Activated T-helper 2 cell treated with anti-CD3 and anti-CD28 coated beads, Interferon-gamma antibody, Interleukin-2, Interleukin-4, amounts not matched to agents 10 μg/mL and 5 μg/mL and 100 μg/mL, durations not matched to agents 14 hours and 24 hours and 36 hours (primary cell): ENCODE measurements at regions of chr11 and their contacts with region 1.

Region 1: DNA sequence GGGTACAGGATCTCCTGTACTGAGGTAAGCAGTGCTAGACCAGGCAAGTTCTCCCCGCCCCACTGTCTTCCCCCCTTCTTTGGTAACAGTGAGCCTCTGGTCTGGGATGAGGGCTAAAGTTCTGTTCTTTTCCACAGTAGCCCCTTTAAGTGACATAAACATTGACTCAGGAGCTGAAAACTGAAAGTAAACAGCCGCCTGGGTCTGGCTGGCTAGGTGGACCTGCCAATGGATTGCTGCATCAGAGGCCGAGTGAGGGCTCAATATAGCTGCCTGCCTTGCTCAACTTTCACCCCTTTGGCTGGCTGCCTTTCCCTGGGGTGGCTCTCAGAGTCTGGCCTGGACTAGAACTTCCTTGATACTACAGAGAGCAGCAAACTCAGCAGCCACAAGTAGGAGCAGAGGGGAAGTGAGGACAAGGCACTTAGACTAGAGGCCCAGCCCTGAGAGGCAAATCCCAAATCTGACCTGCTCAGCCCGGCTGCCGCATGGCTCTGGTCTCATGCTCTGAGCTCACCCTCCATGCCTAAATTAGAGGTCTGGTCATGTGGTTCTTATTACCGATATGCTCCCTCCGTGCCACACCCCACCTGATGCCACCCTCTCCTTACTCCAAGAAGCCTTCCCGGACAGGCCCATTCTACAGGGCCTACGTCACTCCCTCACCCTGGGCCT is 9.6 kb upstream of the UCP3 start:
- DNase-seq: no peak
- H3K4me3 Mint-ChIP-seq: no peak overlapping the region
- H3K27ac Mint-ChIP-seq: no peak overlapping the region
- H3K4me1 Mint-ChIP-seq: peaks cover 44% of the 10 kb centered on the region
- H3K27me3 Mint-ChIP-seq: no peaks in the 10 kb centered on the region

Region 2: GRCh38 chr11:73876424-73877300 is 141.8 kb before region 1 on chr11 and contains the starts of genes COA4 and PAAF1:
- intact Hi-C with region 1: loop called (anchors 2 kb)
- DNase-seq: peak; percentile 93
- H3K4me3 Mint-ChIP-seq: peak within 1 kb of the TSS; percentile 98
- H3K27ac Mint-ChIP-seq: peak within 1 kb of the TSS; percentile 96
- H3K4me1 Mint-ChIP-seq: peaks cover 19% of the 10 kb centered on the region
- H3K27me3 Mint-ChIP-seq: no peaks in the 10 kb centered on the region
- total RNA-seq, gene COA4: 90.2 and 99.9 TPM in 2 replicates
- total RNA-seq, gene PAAF1: 25.4 and 28.7 TPM in 2 replicates

Region 3: DNA sequence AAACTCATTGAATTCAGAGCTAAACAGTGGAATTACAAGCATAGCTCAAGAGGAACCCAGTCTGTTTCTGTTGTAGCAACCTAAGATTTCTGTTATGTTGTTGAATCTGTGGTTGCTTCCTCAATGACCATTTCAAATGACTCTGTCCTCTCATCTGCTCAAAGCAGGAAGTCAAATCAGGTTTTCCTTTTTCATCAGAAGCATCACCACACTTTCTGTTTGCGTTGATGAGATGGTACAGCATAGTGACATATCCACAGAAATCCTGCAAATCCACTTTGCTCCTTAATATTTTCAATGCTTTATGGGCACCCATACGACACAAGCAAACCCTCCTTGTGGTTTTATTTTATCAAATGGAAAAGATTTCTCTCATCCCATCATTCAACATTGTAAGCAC is 23.2 kb before region 1 on chr11:
- intact Hi-C with region 1: loop called (anchors 1 kb)
- DNase-seq: no peak
- H3K4me3 Mint-ChIP-seq: peak overlapping the region; percentile 37
- H3K27ac Mint-ChIP-seq: peak overlapping the region; percentile 96
- H3K4me1 Mint-ChIP-seq: peaks cover 45% of the 10 kb centered on the region
- H3K27me3 Mint-ChIP-seq: no peaks in the 10 kb centered on the region

Region 4: GRCh38 chr11:74138572-74138971 is 120.1 kb after region 1 on chr11:
- intact Hi-C with region 1: no loop called
- DNase-seq: no peak
- H3K4me3 Mint-ChIP-seq: no peak overlapping the region
- H3K27ac Mint-ChIP-seq: no peak overlapping the region
- H3K4me1 Mint-ChIP-seq: no peaks in the 10 kb centered on the region
- H3K27me3 Mint-ChIP-seq: no peaks in the 10 kb centered on the region

Region 5: DNA sequence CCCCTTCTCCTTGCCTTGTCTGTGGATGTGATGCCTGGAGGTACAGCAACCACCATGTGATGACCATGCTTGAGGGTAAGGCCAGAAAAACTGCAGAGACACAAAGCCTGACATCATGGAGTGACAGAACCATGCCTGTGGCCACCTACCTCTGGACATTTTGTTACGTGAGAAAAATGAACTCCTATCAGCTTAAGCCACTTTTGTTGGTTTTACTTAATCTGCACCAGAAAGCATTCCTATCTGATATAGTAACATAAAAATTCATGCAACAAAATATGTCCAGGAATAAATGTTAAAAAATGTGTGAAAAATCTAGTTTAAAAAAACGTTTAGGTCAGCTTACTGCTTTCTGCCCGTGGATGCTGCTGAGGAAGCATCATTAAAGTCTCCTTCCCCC is 335.6 kb after region 1 on chr11:
- intact Hi-C with region 1: no loop called
- DNase-seq: no peak
- H3K4me3 Mint-ChIP-seq: no peak overlapping the region
- H3K27ac Mint-ChIP-seq: no peak overlapping the region
- H3K4me1 Mint-ChIP-seq: peaks cover 4% of the 10 kb centered on the region
- H3K27me3 Mint-ChIP-seq: no peaks in the 10 kb centered on the region